Left ventricle myocardium superior (tissue), 1 donor: ENCODE measurements at regions of chr4 and their contacts with region 1.

Region 1: DNA sequence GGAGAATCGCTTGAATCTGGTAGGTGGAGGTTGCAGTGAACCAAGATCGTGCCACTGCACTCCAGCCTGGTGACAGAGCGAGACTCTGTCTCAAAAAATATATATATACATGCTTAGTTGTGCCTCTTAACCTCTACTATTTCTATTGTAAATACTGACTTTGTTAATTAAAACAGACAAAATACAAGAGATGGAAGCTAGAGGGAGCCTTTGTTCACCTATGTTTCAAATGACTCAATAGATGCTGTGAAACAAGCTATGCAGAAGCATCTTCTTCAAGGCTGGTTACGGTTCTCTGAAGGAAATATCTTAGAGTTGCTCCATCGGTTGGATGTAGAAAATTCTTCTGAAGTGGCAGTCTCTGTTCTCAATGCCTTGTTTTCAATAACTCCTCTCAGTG is 6.2 kb downstream of the NCAPG start:
- DNase-seq: no peak
- ATAC-seq: no peak

Region 2: GRCh38 chr4:17945303-17945702 is 128.3 kb after region 1 on chr4:
- intact Hi-C with region 1: no loop called
- DNase-seq: no peak
- ATAC-seq: no peak

Region 3: DNA sequence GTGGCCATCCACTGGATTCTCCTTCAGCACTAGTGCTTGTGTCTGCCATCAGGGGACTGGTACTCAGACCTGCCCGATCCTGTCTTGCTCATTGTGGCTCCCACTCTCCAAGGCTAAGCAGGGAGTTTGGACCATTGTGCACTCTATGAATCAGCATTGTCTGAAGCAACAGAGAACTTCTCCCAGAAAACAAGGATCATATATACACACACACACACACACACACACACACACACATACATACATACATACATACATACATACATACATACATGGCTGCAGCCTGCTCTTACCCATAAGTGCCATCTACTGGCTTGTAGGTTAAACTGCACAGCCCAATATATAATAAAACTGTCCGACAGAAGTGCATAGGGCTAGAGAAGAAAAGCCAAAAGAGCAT is 549.9 kb after region 1 on chr4:
- intact Hi-C with region 1: loop called (anchors 5 kb)
- DNase-seq: no peak
- ATAC-seq: no peak

Region 4: DNA sequence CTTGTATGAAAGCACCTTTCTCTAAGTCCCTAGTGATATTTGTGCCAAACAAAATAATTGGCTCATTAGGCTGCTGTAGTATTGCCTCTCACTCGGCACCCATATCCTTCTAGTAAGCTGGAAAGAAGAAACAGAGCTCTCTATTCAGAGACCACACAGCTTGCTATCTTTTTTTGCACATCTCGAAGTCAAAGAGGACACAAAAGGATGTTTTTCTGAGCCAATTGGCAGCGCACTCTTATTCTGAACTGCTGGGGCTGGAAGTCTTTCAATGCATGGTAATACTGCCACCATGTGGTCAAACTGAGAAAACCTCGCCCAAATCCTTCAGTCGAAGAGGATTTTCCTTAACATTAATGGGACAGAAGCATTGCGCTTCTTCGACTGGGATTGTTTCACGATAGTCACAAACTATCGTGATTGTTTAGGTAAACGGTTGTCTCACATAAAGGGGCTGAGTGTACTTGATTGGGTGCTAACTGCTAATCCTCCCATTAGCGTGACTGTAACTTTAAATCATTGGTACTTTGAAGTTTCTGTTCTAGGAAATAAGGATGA is 776.5 kb after region 1 on chr4:
- intact Hi-C with region 1: loop called (anchors 5 kb)
- DNase-seq: no peak
- ATAC-seq: peak; percentile 34